ENCODE measurements at regions of chr3 and their contacts with region 1.

Region 1: GRCh38 chr3:158167737-158168471 is 58.0 kb downstream of the RSRC1 start:
- DNase-seq: peak; percentile 69
- H3K4me3 Mint-ChIP-seq: no peak overlapping the region
- H3K27ac Mint-ChIP-seq: peak overlapping the region; percentile 50
- H3K4me1 Mint-ChIP-seq: peaks cover 38% of the 10 kb centered on the region
- H3K27me3 Mint-ChIP-seq: no peaks in the 10 kb centered on the region
- CTCF ChIP-seq: no peak

Region 2: GRCh38 chr3:158026236-158026635 is 141.7 kb before region 1 on chr3:
- CTCF ChIA-PET with region 1: no interaction called
- intact Hi-C with region 1: no loop called
- DNase-seq: no peak
- H3K4me3 Mint-ChIP-seq: no peak overlapping the region
- H3K27ac Mint-ChIP-seq: no peak overlapping the region
- H3K4me1 Mint-ChIP-seq: no peaks in the 10 kb centered on the region
- H3K27me3 Mint-ChIP-seq: no peaks in the 10 kb centered on the region
- CTCF ChIP-seq: no peak

Region 3: GRCh38 chr3:158109804-158110657 is 57.9 kb before region 1 on chr3 and contains the start of gene RSRC1:
- CTCF ChIA-PET with region 1: interaction called, 11 read pairs
- intact Hi-C with region 1: no loop called
- DNase-seq: peak; percentile 91
- H3K4me3 Mint-ChIP-seq: peak within 1 kb of the TSS; percentile 83
- H3K27ac Mint-ChIP-seq: peak within 1 kb of the TSS; percentile 84
- H3K4me1 Mint-ChIP-seq: peaks cover 33% of the 10 kb centered on the region
- H3K27me3 Mint-ChIP-seq: peaks cover 21% of the 10 kb centered on the region
- CTCF ChIP-seq: no peak
- total RNA-seq, gene RSRC1: 81.3 and 82.1 TPM in 2 replicates

Measured in Calu3 (cell line).